ENCODE measurements at regions of chr13 and their contacts with region 1.

Region 1: DNA sequence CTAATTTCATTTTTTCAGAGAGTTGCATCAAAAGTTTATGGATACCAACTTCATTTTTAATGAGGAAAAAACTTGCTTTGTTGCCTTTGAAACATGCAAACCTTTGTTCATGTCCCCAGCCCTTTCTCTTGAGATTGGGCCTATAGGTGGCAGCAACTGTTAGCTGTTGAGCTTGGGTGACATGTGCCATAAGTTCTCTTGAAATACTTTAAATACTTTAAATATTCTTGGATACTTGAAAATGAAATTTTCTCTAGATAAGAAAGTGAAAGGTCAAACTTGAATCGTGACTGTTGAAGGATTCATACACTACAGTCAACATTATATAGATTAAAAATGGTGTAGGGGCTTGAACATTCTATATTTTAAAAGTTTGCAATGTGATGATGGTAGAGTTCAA is 294.9 kb downstream of the NDFIP2 start:
- DNase-seq: peak; percentile 81

Region 2: DNA sequence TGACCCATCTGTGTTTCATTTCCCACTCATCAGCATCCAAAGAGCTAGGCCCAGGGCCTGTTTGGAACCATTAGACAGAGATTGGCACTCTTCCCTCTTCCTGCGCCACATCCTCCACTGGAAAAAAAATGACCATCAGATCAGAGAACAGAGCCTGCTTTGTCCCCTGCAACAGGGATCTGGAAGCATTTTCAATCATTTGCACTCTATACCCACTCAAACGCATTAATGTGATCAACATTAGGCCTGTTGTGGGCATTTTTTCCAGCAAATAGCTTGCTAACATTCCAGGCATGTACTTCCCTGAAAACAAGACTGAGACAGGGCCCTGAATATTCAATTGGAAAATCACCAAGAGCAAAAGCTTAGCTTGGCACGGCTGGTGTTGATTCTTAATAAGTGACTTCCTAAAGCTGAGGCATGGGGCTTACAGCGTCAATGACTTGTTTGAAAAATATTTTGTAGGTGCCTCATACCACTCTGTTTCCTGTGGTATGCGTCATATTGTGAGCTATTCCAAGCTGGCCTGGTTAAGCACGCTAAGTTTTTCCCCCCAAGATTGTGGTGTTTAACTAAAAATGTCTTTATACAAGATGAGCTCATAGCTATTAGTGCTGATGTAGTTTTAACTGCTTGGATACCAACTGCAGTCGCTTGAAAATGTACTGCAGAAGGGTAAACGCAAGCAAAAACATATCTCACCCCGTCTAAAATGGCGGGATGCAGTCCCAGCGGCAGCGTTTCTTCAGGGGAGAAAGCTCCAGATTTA is 160.7 kb after region 1 on chr13:
- in situ Hi-C with region 1: loop called (anchors 25 kb)
- DNase-seq: peak; percentile 99

Measured in SK-MEL-5 (cell line).